Gastrocnemius medialis (tissue), 4 donors: ENCODE measurements at regions of chr11 and their contacts with region 1.

Region 1: GRCh38 chr11:43987384-43988039 is 45.1 kb downstream of the C11orf96 start:
- DNase-seq: peak; percentile 72 to 83
- ATAC-seq: peak; percentile 71 to 79
- H3K4me3 ChIP-seq: peak overlapping the region in 3 of 4 donors; percentile 9 to 33 (median 20)
- H3K27ac ChIP-seq: peak overlapping the region; percentile 61 to 75 (median 72)
- H3K4me1 ChIP-seq: peaks cover 35 to 59% of the 10 kb centered on the region in 2 donors
- H3K27me3 ChIP-seq: no peaks in the 10 kb centered on the region
- CTCF ChIP-seq: no peak
- POLR2A ChIP-seq: no peak

Region 2: DNA sequence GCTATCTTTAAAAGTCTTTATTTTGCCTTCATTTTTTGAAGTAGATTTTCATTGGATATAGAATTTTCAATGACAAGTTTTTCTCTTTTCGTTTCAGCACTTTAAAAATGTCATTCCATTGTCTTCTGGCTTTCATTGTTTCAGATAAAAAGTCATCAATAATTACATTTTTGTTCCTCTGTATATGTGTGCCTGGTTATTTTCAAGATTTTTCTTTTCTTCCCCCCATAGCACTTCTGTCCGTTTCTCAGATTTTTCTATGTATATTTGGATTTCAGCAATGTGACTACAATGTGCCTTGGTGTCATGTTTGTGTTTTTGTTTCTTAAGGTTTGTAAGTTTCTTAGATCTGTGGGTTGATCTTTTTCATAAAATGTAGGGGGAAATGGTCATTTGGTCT is 373.3 kb before region 1 on chr11:
- in situ Hi-C with region 1: no loop called
- intact Hi-C with region 1: no loop called
- DNase-seq: no peak
- ATAC-seq: no peak
- H3K4me3 ChIP-seq: no peak overlapping the region
- H3K27ac ChIP-seq: no peak overlapping the region
- H3K4me1 ChIP-seq: no peaks in the 10 kb centered on the region
- H3K27me3 ChIP-seq: peaks cover 0 to 3% (median 0%) of the 10 kb centered on the region in 3 donors
- CTCF ChIP-seq: no peak
- POLR2A ChIP-seq: no peak

Region 3: DNA sequence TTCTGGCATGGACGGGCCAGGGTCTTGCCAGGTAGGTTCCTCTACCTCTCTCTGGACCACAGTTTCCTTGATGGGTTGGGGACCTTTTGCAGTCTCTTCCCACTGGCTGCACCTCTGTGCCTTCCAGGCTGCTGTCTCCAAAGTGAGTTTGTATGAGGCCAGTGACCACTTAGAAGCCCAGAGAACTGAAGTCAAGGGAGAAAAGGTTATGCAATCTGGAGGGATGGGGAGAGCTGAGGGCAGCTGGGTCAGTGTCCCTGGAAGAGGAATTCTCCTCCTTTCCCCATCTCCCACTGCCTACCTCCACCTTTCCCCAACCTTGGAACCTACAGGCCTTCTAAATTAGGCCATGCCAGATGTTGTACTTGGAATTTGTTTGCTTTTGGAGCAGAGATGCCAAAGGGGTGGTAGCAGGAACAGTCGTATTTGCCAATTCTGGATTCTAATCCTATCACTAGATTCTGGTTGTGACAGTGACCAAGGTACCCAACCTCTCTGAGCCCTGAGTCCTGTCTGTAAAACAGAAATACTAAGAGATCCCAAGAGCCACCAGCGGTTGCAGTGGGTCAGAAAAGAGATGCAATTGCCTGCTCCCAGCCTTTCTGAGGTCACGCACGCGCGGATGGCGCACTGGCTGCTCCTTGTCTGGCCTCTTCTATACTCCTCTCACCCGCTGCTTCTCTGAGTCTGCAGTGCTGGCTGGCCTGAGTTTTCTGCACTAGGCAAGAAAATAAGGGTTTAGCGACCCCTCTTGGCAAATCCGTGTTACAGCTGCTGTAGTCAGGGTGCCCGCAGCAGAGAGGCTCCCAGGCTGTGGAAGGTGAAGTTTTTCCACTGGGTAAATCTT is 49.5 kb after region 1 on chr11:
- in situ Hi-C with region 1: no loop called
- intact Hi-C with region 1: loop called (anchors 2 kb)
- DNase-seq: peak; percentile 38 to 63
- ATAC-seq: peak; percentile 63 to 83
- H3K4me3 ChIP-seq: no peak overlapping the region
- H3K27ac ChIP-seq: peak overlapping the region in 2 of 4 donors; percentile 37 to 50
- H3K4me1 ChIP-seq: peaks cover under 1 to 5% of the 10 kb centered on the region in 2 donors
- H3K27me3 ChIP-seq: peaks cover 0 to 5% (median 5%) of the 10 kb centered on the region in 3 donors
- CTCF ChIP-seq: peak; percentile 47 to 75 (median 61)
- POLR2A ChIP-seq: no peak

Region 4: DNA sequence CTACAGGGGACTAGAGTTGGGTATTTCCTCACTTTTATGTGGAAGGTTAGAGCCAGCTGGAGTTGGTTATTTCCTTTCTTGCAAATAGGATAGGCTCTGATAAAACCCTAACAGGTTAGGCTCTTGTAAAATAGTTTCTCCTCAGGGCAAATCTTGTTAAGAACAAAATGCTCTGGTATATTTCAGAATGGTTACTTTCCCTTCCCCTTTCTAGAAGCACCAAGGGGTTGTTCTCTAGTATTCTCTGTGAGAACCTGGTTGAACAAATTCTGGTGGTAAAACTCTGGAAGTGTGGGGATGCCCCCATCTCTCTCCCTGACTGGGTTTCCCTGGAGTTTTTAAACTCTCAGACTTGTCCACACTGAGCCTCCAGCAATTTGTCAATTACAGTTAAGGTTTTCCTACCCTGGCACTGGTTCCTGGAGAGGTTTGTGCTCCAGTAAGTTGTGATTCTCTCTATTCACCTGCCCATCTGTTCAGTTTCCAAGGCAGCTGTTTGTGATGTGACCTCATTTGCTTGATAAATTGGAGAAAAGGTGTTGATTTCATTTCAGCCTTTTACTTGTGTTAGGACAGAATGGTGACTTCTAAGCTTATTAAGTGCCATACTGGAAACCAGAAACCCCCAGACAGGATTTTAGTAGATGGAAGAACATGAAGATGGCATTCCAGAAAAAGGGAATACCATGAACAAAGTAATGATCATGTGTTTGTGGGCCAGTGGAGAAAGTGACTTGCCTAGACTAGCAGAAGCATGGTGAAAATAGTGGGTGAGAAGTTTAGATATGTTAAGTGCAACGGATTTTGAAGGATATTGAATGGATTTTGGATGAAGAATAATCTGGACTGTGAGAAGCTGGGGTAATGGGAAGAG is 172.6 kb after region 1 on chr11:
- in situ Hi-C with region 1: no loop called
- intact Hi-C with region 1: no loop called
- DNase-seq: no peak
- ATAC-seq: no peak
- H3K4me3 ChIP-seq: no peak overlapping the region
- H3K27ac ChIP-seq: no peak overlapping the region
- H3K4me1 ChIP-seq: peaks cover 14 to 16% of the 10 kb centered on the region in 2 donors
- H3K27me3 ChIP-seq: no peaks in the 10 kb centered on the region
- CTCF ChIP-seq: no peak
- POLR2A ChIP-seq: no peak